ENCODE measurements at regions of chr1 and their contacts with region 1.

Region 1: GRCh38 chr1:109277434-109278204 is 5.3 kb downstream of the PSRC1 start:
- DNase-seq: peak; percentile 61

Region 2: GRCh38 chr1:109385417-109385816 is 107.8 kb after region 1 on chr1:
- in situ Hi-C with region 1: loop called (anchors 10 kb)
- DNase-seq: no peak

Measured in ACHN (cell line).